ENCODE measurements at regions of chr22 and their contacts with region 1.

Region 1: GRCh38 chr22:46044621-46045438 is 67.9 kb upstream of the WNT7B start:
- DNase-seq: peak; percentile 24
- ATAC-seq: peak; percentile 49
- H3K4me3 ChIP-seq: peak overlapping the region; percentile 15 to 74 (median 61)
- H3K4me3 Mint-ChIP-seq: peak overlapping the region; percentile 88
- H3K27ac ChIP-seq: peak overlapping the region; percentile 47 to 54
- H3K27ac Mint-ChIP-seq: peak overlapping the region; percentile 92
- H3K4me1 ChIP-seq: peaks cover 35 to 46% of the 10 kb centered on the region in 2 donors
- H3K4me1 Mint-ChIP-seq: peaks cover 42% of the 10 kb centered on the region
- H3K27me3 ChIP-seq: peaks cover 0 to 5% (median 0%) of the 10 kb centered on the region in 4 experiments
- H3K27me3 Mint-ChIP-seq: no peaks in the 10 kb centered on the region
- CTCF ChIP-seq: no peak

Region 2: DNA sequence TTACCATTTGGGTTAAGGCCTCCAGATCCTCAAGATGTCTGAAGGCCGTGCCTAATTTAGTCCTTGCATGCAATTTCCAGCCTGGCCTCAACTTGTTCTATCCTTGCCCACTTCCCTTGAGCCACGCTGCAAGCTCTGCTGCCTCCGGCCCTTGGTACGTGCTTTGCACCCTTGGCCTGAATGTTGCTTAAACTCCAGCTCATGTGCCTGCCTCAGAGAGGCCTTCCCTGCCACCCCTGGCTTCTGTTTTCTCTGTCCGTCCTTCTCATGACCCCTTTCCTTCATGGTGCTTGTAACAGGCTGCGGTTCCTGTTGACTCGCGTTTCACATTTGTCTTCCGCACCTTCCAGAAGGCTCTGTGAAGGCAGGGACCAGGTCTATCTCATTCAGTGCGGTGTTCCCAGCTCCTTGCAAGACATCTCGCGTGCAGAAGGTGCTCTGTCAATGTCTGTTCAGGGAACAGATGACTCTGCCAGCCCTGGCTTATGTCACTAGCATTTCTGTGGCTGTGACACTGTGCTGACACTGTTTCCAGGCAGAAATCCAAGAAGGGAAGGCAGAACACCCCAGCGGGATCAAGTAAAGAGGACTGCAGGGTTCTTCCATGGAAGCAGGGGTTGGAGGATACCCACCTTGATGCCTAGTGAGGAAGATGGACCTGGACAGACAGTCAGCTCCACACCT is 480.3 kb before region 1 on chr22:
- CTCF ChIA-PET with region 1: no interaction called
- POLR2A ChIA-PET with region 1: no interaction called
- intact Hi-C with region 1: no loop called
- DNase-seq: no peak
- ATAC-seq: no peak
- H3K4me3 ChIP-seq: no peak overlapping the region
- H3K4me3 Mint-ChIP-seq: no peak overlapping the region
- H3K27ac ChIP-seq: no peak overlapping the region
- H3K27ac Mint-ChIP-seq: no peak overlapping the region
- H3K4me1 ChIP-seq: no peaks in the 10 kb centered on the region
- H3K4me1 Mint-ChIP-seq: no peaks in the 10 kb centered on the region
- H3K27me3 ChIP-seq: peaks cover 0 to 16% (median 0%) of the 10 kb centered on the region in 4 experiments
- H3K27me3 Mint-ChIP-seq: peaks cover 30% of the 10 kb centered on the region
- CTCF ChIP-seq: no peak

Region 3: DNA sequence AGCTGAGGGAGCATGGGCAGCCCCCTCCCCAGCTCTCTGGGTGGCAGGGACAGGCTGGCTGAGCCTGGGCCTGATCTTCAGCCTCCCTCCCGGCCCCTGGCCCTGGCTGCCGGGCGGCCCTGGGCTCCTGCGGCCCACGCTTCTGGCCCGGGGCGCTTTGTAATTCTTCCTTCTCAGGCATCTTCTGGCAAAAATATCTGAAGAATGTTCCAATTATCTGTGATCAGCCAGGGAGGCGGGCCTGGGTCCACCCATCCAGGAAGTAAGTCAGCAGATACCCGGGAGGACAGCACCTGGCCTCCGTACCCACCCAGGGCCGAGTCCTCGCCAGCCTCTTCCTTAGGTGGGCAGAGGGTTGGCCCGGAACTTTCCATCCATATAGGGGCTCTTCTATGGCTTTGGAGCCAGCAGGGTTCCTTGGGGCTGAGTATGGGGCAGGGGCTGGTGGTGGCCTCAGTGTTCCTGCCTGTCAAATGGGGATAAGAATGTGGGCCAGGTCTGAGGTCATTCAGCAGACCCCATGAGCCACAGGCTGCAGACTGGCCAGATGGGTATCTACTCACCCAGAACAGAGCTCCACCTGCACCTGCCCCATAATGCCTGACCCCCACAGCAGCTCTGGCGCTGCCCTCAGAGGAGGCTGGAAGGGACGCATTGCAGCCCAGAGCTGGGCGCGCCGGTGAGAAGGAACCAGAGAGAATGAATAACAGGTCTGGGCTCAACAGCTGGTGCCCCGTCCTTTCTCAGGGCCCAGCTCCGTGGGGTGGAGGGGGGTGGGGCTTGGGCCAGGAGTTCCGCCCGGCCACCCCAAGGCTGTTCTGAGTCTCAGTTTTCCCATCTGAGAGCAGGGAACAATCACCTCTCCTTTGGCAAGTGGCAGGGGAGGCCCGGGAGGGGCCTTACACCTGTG is 84.1 kb before region 1 on chr22:
- CTCF ChIA-PET with region 1: no interaction called
- POLR2A ChIA-PET with region 1: no interaction called
- intact Hi-C with region 1: no loop called
- DNase-seq: no peak
- ATAC-seq: no peak
- H3K4me3 ChIP-seq: no peak overlapping the region
- H3K4me3 Mint-ChIP-seq: no peak overlapping the region
- H3K27ac ChIP-seq: no peak overlapping the region
- H3K27ac Mint-ChIP-seq: no peak overlapping the region
- H3K4me1 ChIP-seq: no peaks in the 10 kb centered on the region
- H3K4me1 Mint-ChIP-seq: no peaks in the 10 kb centered on the region
- H3K27me3 ChIP-seq: peaks cover 0 to 25% (median 5%) of the 10 kb centered on the region in 4 experiments
- H3K27me3 Mint-ChIP-seq: peaks cover 15% of the 10 kb centered on the region
- CTCF ChIP-seq: no peak

Region 4: DNA sequence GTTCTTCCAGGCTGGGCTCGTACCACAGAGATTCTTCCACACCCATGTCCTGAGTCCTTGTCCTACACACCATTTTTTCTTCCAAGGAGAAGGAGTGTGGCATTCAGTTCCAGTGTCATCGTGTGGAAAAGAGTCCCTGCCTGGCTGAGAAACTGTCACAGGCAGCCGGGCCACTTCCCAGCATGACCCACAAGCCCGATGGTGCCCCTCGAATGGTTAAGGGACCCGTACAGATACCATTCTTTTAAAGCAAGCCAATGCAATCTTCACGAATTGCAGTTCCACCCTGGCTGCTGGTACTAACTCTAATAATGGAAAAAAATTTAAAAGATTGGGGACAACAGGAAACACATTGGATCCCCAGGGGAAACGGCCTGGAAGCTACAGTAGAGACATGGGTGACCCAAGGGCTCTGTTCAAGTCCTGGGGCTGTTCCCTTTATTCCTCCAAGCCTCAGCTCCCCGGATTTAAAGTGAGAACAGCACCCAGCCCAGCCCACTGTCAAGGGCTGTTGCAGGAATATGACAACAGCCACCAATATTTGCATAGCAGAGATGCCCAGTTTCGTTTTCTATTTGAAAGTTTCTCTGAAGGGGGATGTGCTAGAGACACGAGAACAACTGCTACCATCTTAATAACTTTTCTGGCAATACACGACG is 13.1 kb after region 1 on chr22:
- CTCF ChIA-PET with region 1: interaction called, 4 read pairs
- POLR2A ChIA-PET with region 1: interaction called, 13 read pairs
- intact Hi-C with region 1: loop called (anchors 1 kb)
- DNase-seq: peak; percentile 83
- ATAC-seq: peak; percentile 70
- H3K4me3 ChIP-seq: peak overlapping the region in 2 of 5 experiments; percentile 18 to 28
- H3K4me3 Mint-ChIP-seq: peak overlapping the region; percentile 62
- H3K27ac ChIP-seq: peak overlapping the region; percentile 57 to 89
- H3K27ac Mint-ChIP-seq: peak overlapping the region; percentile 97
- H3K4me1 ChIP-seq: peaks cover 31 to 49% of the 10 kb centered on the region in 2 donors
- H3K4me1 Mint-ChIP-seq: peaks cover 51% of the 10 kb centered on the region
- H3K27me3 ChIP-seq: no peaks in the 10 kb centered on the region
- H3K27me3 Mint-ChIP-seq: no peaks in the 10 kb centered on the region
- CTCF ChIP-seq: no peak

Region 5: GRCh38 chr22:46108564-46109473 is 64.0 kb after region 1 on chr22:
- CTCF ChIA-PET with region 1: no interaction called
- POLR2A ChIA-PET with region 1: no interaction called
- intact Hi-C with region 1: no loop called
- DNase-seq: no peak
- ATAC-seq: no peak
- H3K4me3 ChIP-seq: no peak overlapping the region
- H3K4me3 Mint-ChIP-seq: no peak overlapping the region
- H3K27ac ChIP-seq: no peak overlapping the region
- H3K27ac Mint-ChIP-seq: no peak overlapping the region
- H3K4me1 ChIP-seq: no peaks in the 10 kb centered on the region
- H3K4me1 Mint-ChIP-seq: no peaks in the 10 kb centered on the region
- H3K27me3 ChIP-seq: no peaks in the 10 kb centered on the region
- H3K27me3 Mint-ChIP-seq: no peaks in the 10 kb centered on the region
- CTCF ChIP-seq: no peak